ENCODE measurements at regions of chr3 and their contacts with region 1.

Region 1: GRCh38 chr3:130014526-130014925 is 40.0 kb downstream of the TRH start:
- DNase-seq: no peak
- ATAC-seq: no peak
- H3K4me3 ChIP-seq: no peak overlapping the region
- H3K27ac ChIP-seq: no peak overlapping the region
- H3K4me1 ChIP-seq: no peaks in the 10 kb centered on the region
- H3K27me3 ChIP-seq: no peaks in the 10 kb centered on the region

Region 2: GRCh38 chr3:129878372-129878771 is 136.2 kb before region 1 on chr3:
- intact Hi-C with region 1: no loop called
- DNase-seq: no peak
- ATAC-seq: no peak
- H3K4me3 ChIP-seq: no peak overlapping the region
- H3K27ac ChIP-seq: no peak overlapping the region
- H3K4me1 ChIP-seq: no peaks in the 10 kb centered on the region
- H3K27me3 ChIP-seq: no peaks in the 10 kb centered on the region

Region 3: DNA sequence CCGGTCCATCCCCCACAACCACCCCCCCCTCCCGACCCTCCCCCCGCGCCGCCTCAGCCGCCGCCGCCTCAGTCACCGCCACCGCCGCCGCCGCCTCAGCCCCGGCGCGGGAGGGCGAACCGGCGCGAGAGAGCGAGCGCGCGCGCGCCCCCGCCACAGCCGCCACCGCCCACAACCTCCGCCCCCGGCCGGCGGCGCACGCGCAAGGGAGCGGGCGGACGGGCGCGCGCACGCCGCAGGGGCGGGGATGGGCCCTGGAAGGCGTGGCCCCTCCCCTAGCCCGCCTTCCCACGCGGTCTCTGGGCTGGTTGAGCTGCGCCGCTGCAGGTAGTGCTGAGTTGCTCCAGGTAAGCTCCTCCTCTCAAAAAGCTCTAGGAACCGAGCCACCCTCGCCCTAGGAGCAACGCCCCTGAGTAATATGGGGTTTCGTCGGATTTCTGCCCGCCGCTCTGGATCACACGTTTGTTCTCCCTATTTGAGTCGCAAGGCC is 120.9 kb before region 1 on chr3 and contains the start of gene TMCC1:
- intact Hi-C with region 1: no loop called
- DNase-seq: peak; percentile 87 to 93
- ATAC-seq: peak; percentile 95
- H3K4me3 ChIP-seq: peak within 1 kb of the TSS; percentile 93 to 95
- H3K27ac ChIP-seq: peak within 1 kb of the TSS in 1 of 2 donors; percentile 83
- H3K4me1 ChIP-seq: no peaks in the 10 kb centered on the region
- H3K27me3 ChIP-seq: no peaks in the 10 kb centered on the region
- total RNA-seq, gene TMCC1: 37.3 to 44.2 TPM

Region 4: GRCh38 chr3:129942296-129942695 is 72.2 kb before region 1 on chr3:
- intact Hi-C with region 1: loop called in 1 of 2 experiments (anchors 10 kb)
- DNase-seq: peak in 1 of 2 donors; percentile 78
- ATAC-seq: peak; percentile 81
- H3K4me3 ChIP-seq: no peak overlapping the region
- H3K27ac ChIP-seq: no peak overlapping the region
- H3K4me1 ChIP-seq: no peaks in the 10 kb centered on the region
- H3K27me3 ChIP-seq: no peaks in the 10 kb centered on the region